HepG2 (cell line): ENCODE measurements at regions of chr11 and their contacts with region 1.

Region 1: DNA sequence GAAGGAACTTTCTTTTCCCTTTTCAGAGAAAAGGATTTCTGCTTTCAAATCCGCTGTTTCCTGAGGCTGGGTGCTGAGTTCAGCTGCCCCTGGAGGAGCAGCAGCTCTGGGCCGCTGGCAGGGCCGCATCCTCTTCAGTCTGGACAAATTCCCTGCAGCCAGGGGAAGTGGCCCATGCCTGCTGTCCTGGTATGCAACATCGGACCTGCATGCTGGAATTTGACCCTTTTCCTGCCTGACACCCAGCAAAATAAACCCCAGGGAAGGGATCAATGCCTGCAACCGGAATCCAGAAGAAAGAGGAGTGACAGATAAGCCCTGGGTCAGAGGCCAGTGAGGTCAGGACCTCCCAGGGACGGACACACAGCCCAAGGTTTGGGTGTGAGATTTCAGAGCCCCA is 54.1 kb upstream of the LINC01488 start:
- DNase-seq: peak; percentile 93
- ATAC-seq: peak; percentile 95
- H3K4me3 ChIP-seq: peak overlapping the region in 2 of 3 experiments; percentile 35 to 40; a peak in 2 of 6 replicates
- H3K27ac ChIP-seq: peak overlapping the region; percentile 53
- H3K4me1 ChIP-seq: peaks cover 57% of the 10 kb centered on the region
- H3K27me3 ChIP-seq: no peaks in the 10 kb centered on the region
- CTCF ChIP-seq: peak; percentile 25
- EP300 ChIP-seq: peak; percentile 70 to 91; a peak in 3 of 4 replicates
- POLR2A ChIP-seq: peak in 1 of 2 experiments; percentile 50; a peak in 2 of 4 replicates
- RAD21 ChIP-seq: peak; percentile 24; the same call in 1 of the 2 replicates

Region 2: DNA sequence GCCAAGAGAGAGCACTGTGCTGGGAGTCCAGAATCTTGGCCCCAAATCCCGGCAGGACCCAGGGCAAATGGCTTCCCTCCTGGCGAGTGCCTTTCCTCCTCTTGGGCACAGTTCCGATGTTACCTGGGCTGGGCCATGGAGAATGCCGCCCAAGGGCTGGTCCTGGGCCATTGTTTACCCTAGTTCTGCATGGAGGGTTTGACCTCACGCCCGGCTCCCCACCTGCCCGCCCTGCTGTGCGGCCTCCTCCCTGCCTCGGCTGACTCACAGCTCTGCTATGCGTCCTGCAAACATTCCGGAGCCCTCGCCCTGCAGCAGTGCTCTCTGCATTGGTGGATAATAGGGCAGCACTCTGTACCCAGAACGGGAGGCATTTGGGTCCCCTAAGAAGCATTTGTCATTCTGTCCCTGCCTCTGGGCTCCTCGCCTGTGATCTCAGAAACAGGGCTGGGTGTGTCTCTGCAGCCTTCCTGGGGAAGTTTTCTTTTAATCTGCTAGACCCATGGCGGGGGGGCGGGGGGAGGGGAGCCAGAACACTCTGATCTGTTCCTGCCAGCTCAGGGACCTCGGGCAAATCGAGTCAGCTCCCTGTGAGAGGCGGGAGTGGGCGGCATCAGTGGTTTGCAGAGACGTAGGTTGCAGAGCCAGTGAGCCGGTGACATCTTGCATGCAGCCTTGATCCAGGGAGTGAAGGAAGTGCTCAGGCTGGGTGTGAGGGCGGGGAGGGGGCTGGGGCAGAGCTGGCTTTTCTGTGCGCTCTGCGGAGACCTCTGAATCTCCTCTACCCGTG is 304.5 kb before region 1 on chr11:
- CTCF ChIA-PET with region 1: no interaction called
- POLR2A ChIA-PET with region 1: no interaction called
- in situ Hi-C with region 1: no loop called
- intact Hi-C with region 1: loop called (anchors 5 kb)
- DNase-seq: peak; percentile 91
- ATAC-seq: peak; percentile 97
- H3K4me3 ChIP-seq: peak overlapping the region in 2 of 3 experiments; percentile 1 to 51; a peak in 1 of 6 replicates
- H3K27ac ChIP-seq: no peak overlapping the region
- H3K4me1 ChIP-seq: peaks cover 24% of the 10 kb centered on the region
- H3K27me3 ChIP-seq: peaks cover 3% of the 10 kb centered on the region in 2 experiments; a peak in 1 of 5 replicates
- CTCF ChIP-seq: peak; percentile 16; the same call in 1 of the 2 replicates
- EP300 ChIP-seq: peak; percentile 62 to 71
- POLR2A ChIP-seq: no peak
- RAD21 ChIP-seq: no peak

Region 3: GRCh38 chr11:69296890-69297786 is 130.2 kb before region 1 on chr11:
- CTCF ChIA-PET with region 1: no interaction called
- POLR2A ChIA-PET with region 1: no interaction called
- in situ Hi-C with region 1: loop called (anchors 5 kb)
- intact Hi-C with region 1: no loop called
- DNase-seq: peak; percentile 89
- ATAC-seq: peak; percentile 63
- H3K4me3 ChIP-seq: peak overlapping the region in 2 of 3 experiments; percentile 18 to 60; a peak in 3 of 6 replicates
- H3K27ac ChIP-seq: peak overlapping the region; percentile 25
- H3K4me1 ChIP-seq: peaks cover 51% of the 10 kb centered on the region
- H3K27me3 ChIP-seq: no peaks in the 10 kb centered on the region
- CTCF ChIP-seq: no peak
- EP300 ChIP-seq: peak in 1 of 2 experiments; percentile 64; a peak in 1 of 4 replicates
- POLR2A ChIP-seq: no peak
- RAD21 ChIP-seq: no peak

Region 4: GRCh38 chr11:69398529-69399492 is 28.5 kb before region 1 on chr11:
- CTCF ChIA-PET with region 1: no interaction called
- POLR2A ChIA-PET with region 1: no interaction called
- in situ Hi-C with region 1: no loop called
- intact Hi-C with region 1: loop called (anchors 1 kb)
- DNase-seq: no peak
- ATAC-seq: no peak
- H3K4me3 ChIP-seq: no peak overlapping the region
- H3K27ac ChIP-seq: no peak overlapping the region
- H3K4me1 ChIP-seq: no peaks in the 10 kb centered on the region
- H3K27me3 ChIP-seq: peaks cover 7 to 64% of the 10 kb centered on the region in 2 experiments; a peak in 4 of 5 replicates
- CTCF ChIP-seq: no peak
- EP300 ChIP-seq: no peak
- POLR2A ChIP-seq: no peak
- RAD21 ChIP-seq: no peak

Region 5: DNA sequence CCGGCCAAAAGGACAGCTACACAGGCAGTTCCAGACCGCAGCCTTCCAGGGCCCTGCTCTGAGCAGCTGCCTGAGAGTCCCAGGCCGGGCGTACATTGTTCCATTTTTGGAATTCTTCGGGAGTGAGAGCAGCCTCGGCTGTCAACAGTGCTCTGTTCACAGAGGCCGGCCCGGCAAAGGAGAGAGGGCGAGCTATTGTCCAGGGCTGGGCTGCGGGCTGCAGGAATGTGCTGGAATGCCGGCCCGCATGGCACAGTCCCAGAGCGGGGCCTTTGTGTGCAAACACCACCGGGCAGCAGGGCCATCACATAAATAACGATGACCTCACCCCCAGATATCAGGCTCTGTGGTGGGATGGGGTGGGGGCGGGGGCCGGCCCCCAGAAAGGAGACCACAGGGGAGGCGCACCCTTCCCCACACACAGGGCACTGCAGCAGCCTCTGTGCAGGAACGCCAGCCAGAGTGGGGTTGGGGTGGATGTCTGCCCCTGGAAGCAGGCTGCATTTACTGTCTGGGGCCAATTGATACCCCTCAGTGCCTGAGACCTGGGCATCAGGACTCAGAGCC is 70.0 kb after region 1 on chr11:
- CTCF ChIA-PET with region 1: no interaction called
- POLR2A ChIA-PET with region 1: no interaction called
- in situ Hi-C with region 1: no loop called
- intact Hi-C with region 1: loop called (anchors 1 kb)
- DNase-seq: peak; percentile 97
- ATAC-seq: peak; percentile 97
- H3K4me3 ChIP-seq: peak overlapping the region in 1 of 3 experiments; percentile 35; a peak in 1 of 6 replicates
- H3K27ac ChIP-seq: peak overlapping the region; percentile 14
- H3K4me1 ChIP-seq: peaks cover 64% of the 10 kb centered on the region
- H3K27me3 ChIP-seq: peaks cover 3 to 4% of the 10 kb centered on the region in 2 experiments; a peak in 2 of 5 replicates
- CTCF ChIP-seq: no peak
- EP300 ChIP-seq: peak; percentile 65 to 76; a peak in 2 of 4 replicates
- POLR2A ChIP-seq: no peak
- RAD21 ChIP-seq: peak; percentile 48